CD8-positive, alpha-beta T cell (primary cell): ENCODE measurements at regions of chr12 and their contacts with region 1.

Region 1: GRCh38 chr12:131290255-131290959 is 336.7 kb downstream of the ADGRD1 start:
- DNase-seq: no peak
- ATAC-seq: no peak
- H3K4me3 ChIP-seq: no peak overlapping the region
- H3K4me3 Mint-ChIP-seq: no peak overlapping the region
- H3K27ac ChIP-seq: no peak overlapping the region
- H3K27ac Mint-ChIP-seq: no peak overlapping the region
- H3K4me1 ChIP-seq: no peaks in the 10 kb centered on the region
- H3K4me1 Mint-ChIP-seq: no peaks in the 10 kb centered on the region
- H3K27me3 ChIP-seq: no peaks in the 10 kb centered on the region
- H3K27me3 Mint-ChIP-seq: peaks cover 8% of the 10 kb centered on the region
- CTCF ChIP-seq: no peak

Region 2: DNA sequence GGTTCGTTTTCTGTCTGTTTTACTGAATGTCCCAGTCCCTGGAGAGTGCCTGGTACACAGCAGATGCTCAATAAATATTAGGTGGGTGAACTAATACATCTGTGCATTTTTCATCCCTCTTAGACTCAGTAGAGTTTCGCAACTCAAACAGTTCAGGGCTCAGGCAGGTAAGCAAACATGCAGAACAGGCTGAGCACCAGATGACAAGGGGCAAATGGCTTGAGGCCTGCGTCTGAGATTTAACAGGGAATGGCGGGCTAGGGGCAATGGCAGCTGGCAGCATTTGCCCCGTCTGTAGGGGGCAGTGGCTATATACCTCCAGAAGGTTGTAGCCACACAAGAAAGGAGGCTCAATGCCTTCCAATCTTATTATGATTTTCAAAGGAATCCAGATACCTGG is 427.1 kb before region 1 on chr12:
- CTCF ChIA-PET with region 1: no interaction called
- POLR2A ChIA-PET with region 1: no interaction called
- intact Hi-C with region 1: no loop called
- DNase-seq: no peak
- ATAC-seq: no peak
- H3K4me3 ChIP-seq: no peak overlapping the region
- H3K4me3 Mint-ChIP-seq: no peak overlapping the region
- H3K27ac ChIP-seq: no peak overlapping the region
- H3K27ac Mint-ChIP-seq: no peak overlapping the region
- H3K4me1 ChIP-seq: peaks cover 13% of the 10 kb centered on the region
- H3K4me1 Mint-ChIP-seq: peaks cover 11% of the 10 kb centered on the region
- H3K27me3 ChIP-seq: no peaks in the 10 kb centered on the region
- H3K27me3 Mint-ChIP-seq: peaks cover 2% of the 10 kb centered on the region
- CTCF ChIP-seq: no peak

Region 3: GRCh38 chr12:131673888-131674257 is 383.5 kb after region 1 on chr12:
- CTCF ChIA-PET with region 1: no interaction called
- POLR2A ChIA-PET with region 1: no interaction called
- intact Hi-C with region 1: loop called in 1 of 2 experiments (anchors 5 kb)
- DNase-seq: no peak
- ATAC-seq: no peak
- H3K4me3 ChIP-seq: no peak overlapping the region
- H3K4me3 Mint-ChIP-seq: no peak overlapping the region
- H3K27ac ChIP-seq: no peak overlapping the region
- H3K27ac Mint-ChIP-seq: no peak overlapping the region
- H3K4me1 ChIP-seq: no peaks in the 10 kb centered on the region
- H3K4me1 Mint-ChIP-seq: no peaks in the 10 kb centered on the region
- H3K27me3 ChIP-seq: no peaks in the 10 kb centered on the region
- H3K27me3 Mint-ChIP-seq: peaks cover 6% of the 10 kb centered on the region
- CTCF ChIP-seq: no peak